GM12878 (cell line): ENCODE measurements at regions of chr1 and their contacts with region 1.

Region 1: DNA sequence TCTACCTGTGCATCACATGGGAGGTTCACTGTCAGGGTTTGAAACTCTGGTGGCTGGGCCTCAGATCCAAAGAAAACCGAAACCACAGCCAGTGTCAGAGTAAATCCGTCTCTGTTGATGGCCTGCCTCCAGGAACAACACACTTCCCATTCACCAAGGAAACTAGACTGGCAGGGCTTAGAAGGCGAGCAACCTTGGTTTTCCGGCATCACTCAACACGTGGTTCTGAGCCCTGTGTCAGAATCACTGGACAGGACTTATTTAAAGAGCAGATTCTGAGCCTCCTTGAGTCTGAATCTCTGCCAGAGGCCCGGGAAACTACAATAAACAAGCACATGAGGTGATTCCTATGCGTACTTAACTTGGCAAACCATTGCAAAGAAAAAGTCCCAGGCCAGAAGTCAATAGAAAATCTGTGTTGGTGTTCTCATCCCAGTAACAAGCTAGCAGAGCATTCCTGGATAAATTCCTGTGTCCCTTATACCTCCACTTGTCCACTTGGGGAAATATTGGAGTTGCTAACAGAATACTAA is 70.0 kb downstream of the KCTD3 start:
- DNase-seq: no peak
- ATAC-seq: peak; percentile 37
- H3K4me3 ChIP-seq: no peak overlapping the region
- H3K27ac ChIP-seq: no peak overlapping the region
- H3K4me1 ChIP-seq: no peaks in the 10 kb centered on the region
- H3K27me3 ChIP-seq: no peaks in the 10 kb centered on the region
- CTCF ChIP-seq: no peak
- EP300 ChIP-seq: no peak
- POLR2A ChIP-seq: no peak
- RAD21 ChIP-seq: no peak

Region 2: DNA sequence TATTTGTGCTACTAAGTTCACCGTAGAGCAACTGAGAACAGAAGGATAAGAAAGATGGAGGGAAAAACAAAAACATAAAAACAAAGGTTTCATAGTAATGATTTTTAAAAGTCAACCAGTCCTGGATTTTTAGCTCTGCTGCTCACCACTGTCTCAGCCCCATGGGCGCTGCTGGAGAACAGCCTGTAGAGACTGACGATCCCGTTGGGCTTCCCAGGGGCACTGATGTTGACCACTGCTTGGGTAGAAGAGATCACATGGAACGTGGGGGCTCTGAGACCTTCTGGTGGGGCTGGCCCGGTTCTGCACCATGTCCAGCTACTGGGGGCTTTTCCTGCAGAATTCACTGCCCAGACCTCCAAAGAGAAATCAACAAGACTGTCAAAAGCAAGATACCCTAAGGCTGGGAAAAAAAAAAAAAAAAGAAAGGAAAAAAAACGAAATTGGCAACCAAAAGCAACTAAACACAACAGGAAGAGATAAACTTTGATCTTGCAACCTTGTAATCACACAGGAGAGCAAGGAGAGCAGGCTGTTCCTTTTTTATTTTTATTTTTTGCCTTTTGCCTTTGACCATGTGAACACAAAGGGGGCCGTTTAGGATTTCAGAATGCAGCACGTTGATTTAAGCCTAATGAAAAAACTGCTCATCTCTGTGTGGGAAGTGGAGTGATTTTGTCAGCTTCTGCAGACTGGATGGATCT is 13.5 kb after region 1 on chr1:
- CTCF ChIA-PET with region 1: interaction called, 3 read pairs
- POLR2A ChIA-PET with region 1: interaction called, 4 read pairs
- RAD21 ChIA-PET with region 1: interaction called, 3 read pairs
- SMC1A ChIA-PET with region 1: interaction called, 13 read pairs
- in situ Hi-C with region 1: no loop called
- intact Hi-C with region 1: no loop called
- DNase-seq: no peak
- ATAC-seq: no peak
- H3K4me3 ChIP-seq: no peak overlapping the region
- H3K27ac ChIP-seq: no peak overlapping the region
- H3K4me1 ChIP-seq: no peaks in the 10 kb centered on the region
- H3K27me3 ChIP-seq: no peaks in the 10 kb centered on the region
- CTCF ChIP-seq: no peak
- EP300 ChIP-seq: no peak
- POLR2A ChIP-seq: no peak
- RAD21 ChIP-seq: no peak

Region 3: GRCh38 chr1:215665215-215665614 is 28.1 kb after region 1 on chr1:
- CTCF ChIA-PET with region 1: interaction called, 4 read pairs
- POLR2A ChIA-PET with region 1: interaction called, 6 read pairs
- RAD21 ChIA-PET with region 1: interaction called, 9 read pairs
- SMC1A ChIA-PET with region 1: interaction called, 60 read pairs
- in situ Hi-C with region 1: no loop called
- intact Hi-C with region 1: no loop called
- DNase-seq: no peak
- ATAC-seq: peak; percentile 86
- H3K4me3 ChIP-seq: no peak overlapping the region
- H3K27ac ChIP-seq: no peak overlapping the region
- H3K4me1 ChIP-seq: no peaks in the 10 kb centered on the region
- H3K27me3 ChIP-seq: no peaks in the 10 kb centered on the region
- CTCF ChIP-seq: no peak
- EP300 ChIP-seq: no peak
- POLR2A ChIP-seq: no peak
- RAD21 ChIP-seq: no peak

Region 4: GRCh38 chr1:215863796-215864195 is 226.7 kb after region 1 on chr1:
- CTCF ChIA-PET with region 1: no interaction called
- POLR2A ChIA-PET with region 1: no interaction called
- RAD21 ChIA-PET with region 1: no interaction called
- SMC1A ChIA-PET with region 1: no interaction called
- in situ Hi-C with region 1: no loop called
- intact Hi-C with region 1: no loop called
- DNase-seq: no peak
- ATAC-seq: peak; percentile 90
- H3K4me3 ChIP-seq: no peak overlapping the region
- H3K27ac ChIP-seq: no peak overlapping the region
- H3K4me1 ChIP-seq: no peaks in the 10 kb centered on the region
- H3K27me3 ChIP-seq: no peaks in the 10 kb centered on the region
- CTCF ChIP-seq: peak in 1 of 3 experiments; percentile 18; a peak in 1 of 6 replicates
- EP300 ChIP-seq: no peak
- POLR2A ChIP-seq: no peak
- RAD21 ChIP-seq: 0 out of 2 replicates have a peak, but pooled peaks have one; percentile 18

Region 5: GRCh38 chr1:215923128-215923824 is 286.2 kb after region 1 on chr1:
- CTCF ChIA-PET with region 1: no interaction called
- POLR2A ChIA-PET with region 1: no interaction called
- RAD21 ChIA-PET with region 1: no interaction called
- SMC1A ChIA-PET with region 1: no interaction called
- in situ Hi-C with region 1: no loop called
- intact Hi-C with region 1: no loop called
- DNase-seq: no peak
- ATAC-seq: no peak
- H3K4me3 ChIP-seq: no peak overlapping the region
- H3K27ac ChIP-seq: no peak overlapping the region
- H3K4me1 ChIP-seq: no peaks in the 10 kb centered on the region
- H3K27me3 ChIP-seq: no peaks in the 10 kb centered on the region
- CTCF ChIP-seq: no peak
- EP300 ChIP-seq: no peak
- POLR2A ChIP-seq: no peak
- RAD21 ChIP-seq: no peak